GM12878 (cell line): ENCODE measurements at regions of chr12 and their contacts with region 1.

Region 1: GRCh38 chr12:26274441-26275312 is 79.3 kb downstream of the SSPN start:
- DNase-seq: peak; percentile 94
- ATAC-seq: peak; percentile 95
- H3K4me3 ChIP-seq: no peak overlapping the region
- H3K27ac ChIP-seq: peak overlapping the region; percentile 73
- H3K4me1 ChIP-seq: peaks cover 44% of the 10 kb centered on the region
- H3K27me3 ChIP-seq: no peaks in the 10 kb centered on the region
- CTCF ChIP-seq: peak in 1 of 3 experiments; percentile 18; a peak in 1 of 6 replicates
- EP300 ChIP-seq: peak; percentile 37 to 79; a peak in 3 of 4 replicates
- POLR2A ChIP-seq: peak; percentile 40; the same call in 1 of the 2 replicates
- RAD21 ChIP-seq: peak; percentile 37; the same call in 1 of the 2 replicates

Region 2: GRCh38 chr12:26113853-26114719 is 160.6 kb before region 1 on chr12:
- CTCF ChIA-PET with region 1: interaction called, 43 read pairs
- POLR2A ChIA-PET with region 1: interaction called, 5 read pairs
- RAD21 ChIA-PET with region 1: interaction called, 15 read pairs
- SMC1A ChIA-PET with region 1: interaction called, 23 read pairs
- in situ Hi-C with region 1: no loop called
- intact Hi-C with region 1: no loop called
- DNase-seq: no peak
- ATAC-seq: peak; percentile 95
- H3K4me3 ChIP-seq: peak overlapping the region; percentile 73; the same call in 1 of the 2 replicates
- H3K27ac ChIP-seq: no peak overlapping the region
- H3K4me1 ChIP-seq: peaks cover 17% of the 10 kb centered on the region
- H3K27me3 ChIP-seq: peaks cover 0 to 15% of the 10 kb centered on the region in 2 experiments; a peak in 1 of 4 replicates
- CTCF ChIP-seq: peak in 2 of 3 experiments; percentile 20 to 29; a peak in 3 of 6 replicates
- EP300 ChIP-seq: no peak
- POLR2A ChIP-seq: peak; percentile 68
- RAD21 ChIP-seq: no peak

Region 3: GRCh38 chr12:26177283-26177682 is 97.4 kb before region 1 on chr12:
- CTCF ChIA-PET with region 1: interaction called, 3 read pairs
- POLR2A ChIA-PET with region 1: interaction called, 3 read pairs
- RAD21 ChIA-PET with region 1: no interaction called
- SMC1A ChIA-PET with region 1: interaction called, 11 read pairs
- in situ Hi-C with region 1: no loop called
- intact Hi-C with region 1: no loop called
- DNase-seq: no peak
- ATAC-seq: peak; percentile 89
- H3K4me3 ChIP-seq: no peak overlapping the region
- H3K27ac ChIP-seq: no peak overlapping the region
- H3K4me1 ChIP-seq: peaks cover 4% of the 10 kb centered on the region
- H3K27me3 ChIP-seq: peaks cover 0 to 8% of the 10 kb centered on the region in 2 experiments; a peak in 3 of 4 replicates
- CTCF ChIP-seq: no peak
- EP300 ChIP-seq: no peak
- POLR2A ChIP-seq: no peak
- RAD21 ChIP-seq: no peak

Region 4: DNA sequence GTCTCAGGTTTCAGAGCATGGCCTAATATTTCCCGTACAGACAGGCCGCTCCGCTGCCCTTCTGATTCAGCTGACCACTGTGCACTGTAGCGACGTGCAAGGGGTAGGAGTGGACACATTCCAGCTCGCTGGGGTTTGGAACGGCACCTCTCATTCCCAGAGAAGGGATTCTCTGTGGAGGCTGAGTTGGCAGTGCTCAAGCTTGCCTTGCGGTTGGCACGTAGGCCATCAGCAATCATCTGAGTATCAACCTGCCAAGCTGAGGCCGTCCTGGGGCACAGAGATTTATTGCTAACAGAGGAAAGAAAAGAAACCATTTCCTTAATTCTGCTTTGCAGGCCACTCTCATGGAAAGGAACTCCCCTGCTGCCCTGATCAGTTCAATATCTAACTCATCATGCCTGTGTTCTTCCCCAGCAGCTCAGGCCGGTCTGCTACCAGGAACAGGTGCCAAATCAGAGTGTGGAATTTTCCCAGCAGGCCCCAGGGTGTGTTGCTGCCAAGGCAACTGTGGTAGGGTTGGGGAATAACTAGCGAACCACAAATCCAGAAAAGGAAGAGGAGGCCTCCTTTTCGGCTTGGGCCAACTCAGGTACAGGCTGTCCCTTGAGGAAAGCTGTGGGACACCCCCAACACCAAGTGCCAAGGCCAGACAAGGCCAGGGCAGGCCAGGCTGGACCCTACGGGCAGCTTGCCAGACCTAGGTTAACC is 13.1 kb after region 1 on chr12:
- CTCF ChIA-PET with region 1: interaction called, 6 read pairs
- POLR2A ChIA-PET with region 1: interaction called, 3 read pairs
- RAD21 ChIA-PET with region 1: interaction called, 3 read pairs
- SMC1A ChIA-PET with region 1: interaction called, 31 read pairs
- in situ Hi-C with region 1: no loop called
- intact Hi-C with region 1: no loop called
- DNase-seq: no peak
- ATAC-seq: no peak; the same call in 2 of the 3 replicates
- H3K4me3 ChIP-seq: no peak overlapping the region
- H3K27ac ChIP-seq: no peak overlapping the region
- H3K4me1 ChIP-seq: no peaks in the 10 kb centered on the region
- H3K27me3 ChIP-seq: no peaks in the 10 kb centered on the region; a peak in 2 of 4 replicates
- CTCF ChIP-seq: no peak
- EP300 ChIP-seq: no peak
- POLR2A ChIP-seq: no peak
- RAD21 ChIP-seq: no peak

Region 5: GRCh38 chr12:26318661-26319068 is 44.0 kb after region 1 on chr12:
- CTCF ChIA-PET with region 1: interaction called, 3 read pairs
- POLR2A ChIA-PET with region 1: interaction called, 10 read pairs
- RAD21 ChIA-PET with region 1: interaction called, 26 read pairs
- SMC1A ChIA-PET with region 1: interaction called, 27 read pairs
- in situ Hi-C with region 1: no loop called
- intact Hi-C with region 1: no loop called
- DNase-seq: no peak
- ATAC-seq: peak; percentile 93
- H3K4me3 ChIP-seq: no peak overlapping the region
- H3K27ac ChIP-seq: no peak overlapping the region
- H3K4me1 ChIP-seq: peaks cover 14% of the 10 kb centered on the region
- H3K27me3 ChIP-seq: no peaks in the 10 kb centered on the region
- CTCF ChIP-seq: no peak
- EP300 ChIP-seq: peak in 1 of 2 experiments; percentile 35; a peak in 1 of 4 replicates
- POLR2A ChIP-seq: no peak
- RAD21 ChIP-seq: no peak